Psoas muscle (tissue), 8 donors: ENCODE measurements at regions of chr19 and their contacts with region 1.

Region 1: DNA sequence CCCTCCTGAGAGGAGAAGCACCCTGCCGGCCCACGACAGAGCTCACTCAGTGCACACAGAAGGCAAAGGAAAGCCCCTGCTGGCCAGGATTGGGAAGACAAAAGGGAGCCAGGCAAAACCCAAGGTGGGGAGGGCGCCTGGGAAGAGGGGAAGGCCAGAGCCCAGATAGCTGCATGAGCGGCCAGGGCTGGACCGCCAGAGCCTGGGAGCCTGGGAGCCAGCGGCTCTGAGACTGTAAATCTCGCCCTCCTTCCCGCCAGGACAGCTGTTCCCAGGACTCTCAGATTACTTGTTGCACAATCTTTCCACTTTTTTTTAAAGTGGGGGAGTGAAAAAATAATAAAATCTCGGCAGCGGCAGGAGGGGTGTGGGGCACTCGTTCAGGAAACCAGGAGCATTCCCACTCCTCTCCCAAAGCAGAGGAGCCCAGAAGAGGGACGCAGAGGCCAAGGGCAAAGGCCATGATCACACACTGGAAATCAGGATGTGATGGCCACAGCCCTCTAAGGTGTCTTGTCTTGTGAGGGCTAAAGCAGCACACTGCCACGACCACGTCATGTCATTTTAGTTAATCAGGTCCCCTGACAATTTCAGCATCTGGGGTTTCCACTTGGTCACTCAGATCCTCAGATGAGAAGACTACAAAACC is 19.6 kb upstream of the EPHX3 start:
- DNase-seq: peak; percentile 88 to 95
- ATAC-seq: peak; percentile 81 to 86 (median 84)
- H3K4me3 ChIP-seq: peak overlapping the region; percentile 36
- H3K27ac ChIP-seq: peak overlapping the region; percentile 91
- H3K4me1 ChIP-seq: peaks cover 69% of the 10 kb centered on the region
- H3K27me3 ChIP-seq: no peaks in the 10 kb centered on the region
- CTCF ChIP-seq: peak; percentile 54

Region 2: DNA sequence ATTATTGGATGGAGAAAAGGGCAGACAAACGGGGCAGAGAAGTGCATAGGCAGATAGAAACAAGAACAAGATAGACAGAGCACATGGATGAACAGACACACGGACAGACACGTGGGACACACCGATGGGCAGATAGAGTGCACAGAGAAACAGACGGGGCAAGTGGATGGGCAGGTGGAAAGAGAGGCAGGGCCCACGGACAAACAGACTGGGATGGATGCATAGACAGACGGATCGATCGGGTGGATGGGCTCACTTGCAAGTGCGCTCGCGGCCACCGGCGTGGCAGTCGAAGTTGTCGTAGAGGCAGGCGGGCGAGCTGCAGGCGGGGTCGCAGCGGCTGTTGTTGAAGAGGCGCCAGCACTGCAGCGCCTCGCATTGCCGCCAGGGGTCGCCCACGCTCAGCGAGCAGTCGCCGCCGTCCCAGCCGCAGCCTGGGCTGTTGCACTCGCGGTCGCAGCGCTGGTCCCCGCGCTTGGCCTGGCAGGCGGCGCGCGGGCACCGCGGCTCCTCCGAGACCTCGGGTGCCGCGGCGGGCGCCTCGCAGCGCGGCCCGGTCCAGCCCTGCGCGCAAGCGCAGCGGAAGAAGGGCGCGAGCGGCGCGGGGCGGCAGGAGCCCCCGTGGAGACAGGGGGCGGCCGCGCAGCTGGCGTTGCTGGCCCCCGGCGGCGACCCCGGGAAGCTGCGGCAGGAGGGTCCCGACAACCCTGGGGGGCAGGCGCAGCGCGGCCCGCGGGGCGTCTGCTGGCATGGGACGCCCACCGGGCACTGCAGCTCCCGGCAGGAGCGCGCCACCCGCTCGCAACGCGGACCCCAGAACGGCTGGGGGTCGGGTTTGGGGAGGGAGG is 74.4 kb before region 1 on chr19:
- intact Hi-C with region 1: loop called (anchors 2 to 5 kb)
- DNase-seq: peak; percentile 79 to 90
- ATAC-seq: peak; percentile 86 to 97 (median 94)
- H3K4me3 ChIP-seq: peak overlapping the region; percentile 39
- H3K27ac ChIP-seq: no peak overlapping the region
- H3K4me1 ChIP-seq: peaks cover 3% of the 10 kb centered on the region
- H3K27me3 ChIP-seq: peaks cover 0 to 18% (median 5%) of the 10 kb centered on the region in 3 donors
- CTCF ChIP-seq: peak; percentile 100

Region 3: GRCh38 chr19:15432629-15433518 is 181.0 kb after region 1 on chr19:
- intact Hi-C with region 1: loop called in 1 of 2 experiments (anchors 10 kb)
- DNase-seq: peak; percentile 95 to 97
- ATAC-seq: peak; percentile 91 to 97 (median 92)
- H3K4me3 ChIP-seq: peak overlapping the region; percentile 83
- H3K27ac ChIP-seq: peak overlapping the region; percentile 96
- H3K4me1 ChIP-seq: peaks cover 25% of the 10 kb centered on the region
- H3K27me3 ChIP-seq: no peaks in the 10 kb centered on the region
- CTCF ChIP-seq: no peak

Region 4: DNA sequence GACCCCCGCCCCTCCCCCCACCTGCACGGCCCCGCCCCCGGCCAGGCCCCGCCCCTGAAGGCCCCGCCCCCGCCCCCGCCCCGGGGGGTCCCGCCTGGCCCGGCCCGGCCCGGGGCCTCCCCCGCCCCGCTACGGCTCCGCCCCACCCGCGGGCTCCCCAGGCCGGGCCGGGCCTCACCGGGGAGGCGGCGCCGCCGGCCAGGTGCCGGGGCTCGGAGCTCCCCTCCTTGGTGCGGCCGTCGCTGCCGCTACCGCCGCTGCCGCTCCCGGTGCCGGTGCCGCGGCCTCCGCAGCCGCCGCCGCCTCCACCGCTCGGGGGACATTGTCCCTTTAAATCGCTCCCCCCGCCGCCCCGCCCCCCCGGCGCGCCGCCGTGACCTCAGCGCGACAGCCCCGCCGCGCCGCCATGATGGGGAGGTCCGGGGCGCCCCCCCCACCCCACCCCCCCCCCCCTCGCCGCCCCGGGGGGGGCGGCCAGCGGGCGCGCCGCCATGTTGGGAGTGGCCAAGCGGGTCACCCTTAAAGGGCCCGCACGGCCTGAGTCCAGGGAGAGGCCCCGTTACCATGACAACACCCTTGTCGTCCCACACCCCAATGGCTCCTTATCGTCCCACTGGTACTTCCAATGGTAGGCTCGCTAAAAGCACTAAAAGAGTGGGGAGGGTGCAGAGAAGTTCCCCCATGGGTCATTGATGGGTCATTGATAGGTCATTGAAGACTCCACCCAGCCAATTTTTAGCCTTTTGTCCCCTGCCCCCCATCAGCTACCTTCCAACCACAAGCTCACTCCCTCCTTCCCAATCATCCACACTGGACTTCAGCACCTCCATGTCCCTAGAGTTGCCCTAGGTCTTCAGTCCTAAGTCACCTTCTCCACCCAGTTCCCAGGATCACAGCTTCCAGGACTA is 198.0 kb after region 1 on chr19 and contains the start of gene WIZ:
- intact Hi-C with region 1: loop called in 1 of 2 experiments (anchors 2 kb)
- DNase-seq: peak; percentile 91 to 94
- ATAC-seq: peak; percentile 16 to 42 (median 18)
- H3K4me3 ChIP-seq: peak within 1 kb of the TSS; percentile 78
- H3K27ac ChIP-seq: peak within 1 kb of the TSS; percentile 78
- H3K4me1 ChIP-seq: peaks cover 27% of the 10 kb centered on the region
- H3K27me3 ChIP-seq: peaks cover 0 to under 1% (median 0%) of the 10 kb centered on the region in 3 donors
- CTCF ChIP-seq: no peak
- total RNA-seq, gene WIZ: 16.6 to 39.1 (median 25.8) TPM